ENCODE measurements at regions of chr9 and their contacts with region 1.

Region 1: GRCh38 chr9:21812946-21813568 is 10.6 kb downstream of the MTAP start:
- DNase-seq: peak; percentile 76 to 87
- ATAC-seq: peak; percentile 88
- H3K4me3 ChIP-seq: no peak overlapping the region
- H3K27ac ChIP-seq: peak overlapping the region in 1 of 2 donors; percentile 8
- H3K4me1 ChIP-seq: no peaks in the 10 kb centered on the region
- H3K27me3 ChIP-seq: no peaks in the 10 kb centered on the region

Region 2: DNA sequence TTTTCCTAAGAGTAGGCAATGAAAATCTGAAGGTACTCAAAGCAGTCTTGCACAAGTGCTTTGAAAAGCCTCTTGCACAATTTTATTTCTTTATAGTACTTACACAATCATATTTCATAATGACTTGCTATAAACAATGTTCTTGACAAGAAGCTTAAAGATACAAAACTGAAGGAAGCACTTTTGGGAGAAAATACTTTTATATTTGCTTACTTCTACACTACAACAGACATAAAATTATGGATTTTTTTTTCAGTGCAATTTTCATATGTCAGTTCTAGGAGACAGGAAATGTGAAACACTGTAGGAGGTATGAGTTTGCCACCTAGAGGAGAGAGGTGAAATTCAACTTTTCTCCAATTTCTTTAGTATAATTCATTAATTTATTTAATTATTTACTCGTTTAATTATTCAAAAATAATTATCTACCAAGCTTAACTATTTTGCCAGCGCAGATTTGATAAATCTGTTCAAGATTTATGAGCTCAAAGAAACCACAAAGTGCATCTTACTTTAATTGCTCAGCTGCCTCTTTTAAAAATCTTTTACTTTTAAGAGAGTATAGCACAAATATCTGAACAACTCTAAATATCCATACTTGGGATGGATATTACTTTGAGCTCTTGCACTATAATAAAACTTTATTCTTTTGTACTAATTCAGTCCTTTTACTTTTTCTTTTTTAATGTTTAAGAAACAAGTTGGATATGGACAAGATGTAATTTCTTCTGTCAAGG is 225.1 kb after region 1 on chr9:
- intact Hi-C with region 1: loop called (anchors 5 kb)
- DNase-seq: no peak
- ATAC-seq: no peak
- H3K4me3 ChIP-seq: no peak overlapping the region
- H3K27ac ChIP-seq: no peak overlapping the region
- H3K4me1 ChIP-seq: no peaks in the 10 kb centered on the region
- H3K27me3 ChIP-seq: no peaks in the 10 kb centered on the region

Region 3: GRCh38 chr9:22119537-22120158 is 306.6 kb after region 1 on chr9:
- intact Hi-C with region 1: loop called (anchors 2 kb)
- DNase-seq: no peak
- ATAC-seq: peak; percentile 52
- H3K4me3 ChIP-seq: no peak overlapping the region
- H3K27ac ChIP-seq: no peak overlapping the region
- H3K4me1 ChIP-seq: no peaks in the 10 kb centered on the region
- H3K27me3 ChIP-seq: no peaks in the 10 kb centered on the region

Region 4: DNA sequence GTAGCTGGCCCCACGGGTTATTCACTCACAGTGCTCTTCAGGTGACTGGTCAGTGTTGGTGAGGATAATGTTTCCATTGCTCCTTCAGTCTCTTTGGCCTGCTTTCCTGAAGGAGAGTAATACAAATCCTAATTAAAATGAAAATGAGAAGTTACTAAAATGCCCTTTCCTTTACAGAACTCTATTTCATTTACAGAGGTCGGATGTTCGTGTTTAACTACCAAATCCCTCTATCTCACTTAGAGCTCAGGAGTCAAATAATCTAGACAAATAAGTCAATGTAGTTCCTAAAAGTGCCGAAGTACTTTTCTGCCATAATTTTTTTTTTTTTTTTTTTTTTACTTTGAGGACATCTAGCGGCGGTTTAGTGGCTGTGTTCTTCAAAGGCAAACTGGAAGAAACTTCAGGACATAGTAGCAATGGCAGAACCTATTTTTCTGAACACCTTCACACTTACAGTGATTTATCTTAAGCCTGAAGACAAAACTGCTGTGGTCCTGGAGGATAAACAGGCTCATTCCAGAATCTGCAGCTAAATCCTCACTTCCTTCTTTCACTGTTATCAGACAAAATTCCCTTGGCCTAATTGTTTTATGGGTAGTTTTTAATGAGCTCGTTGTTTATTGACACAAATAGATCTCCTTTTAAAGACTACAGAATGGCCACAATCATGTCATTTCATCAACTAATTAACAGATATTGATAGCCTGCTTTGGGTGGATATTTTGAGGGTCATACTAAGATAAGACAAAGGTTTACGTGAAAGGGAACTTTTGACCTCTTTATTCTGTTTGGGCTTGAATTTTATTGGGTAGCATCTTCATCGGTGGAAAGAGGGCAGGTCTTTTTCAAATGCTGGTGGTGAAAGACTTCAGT is 426.0 kb after region 1 on chr9:
- intact Hi-C with region 1: loop called (anchors 5 kb)
- DNase-seq: no peak
- ATAC-seq: no peak
- H3K4me3 ChIP-seq: no peak overlapping the region
- H3K27ac ChIP-seq: no peak overlapping the region
- H3K4me1 ChIP-seq: no peaks in the 10 kb centered on the region
- H3K27me3 ChIP-seq: no peaks in the 10 kb centered on the region

Region 5: GRCh38 chr9:22446950-22447617 is 634.0 kb after region 1 on chr9:
- intact Hi-C with region 1: loop called (anchors 5 to 10 kb)
- DNase-seq: peak; percentile 65 to 78
- ATAC-seq: peak; percentile 87
- H3K4me3 ChIP-seq: peak overlapping the region; percentile 51 to 73
- H3K27ac ChIP-seq: peak overlapping the region in 1 of 2 donors; percentile 74
- H3K4me1 ChIP-seq: peaks cover 0 to 4% of the 10 kb centered on the region in 2 donors
- H3K27me3 ChIP-seq: no peaks in the 10 kb centered on the region

Region 6: GRCh38 chr9:22452415-22453010 is 639.5 kb after region 1 on chr9:
- intact Hi-C with region 1: loop called (anchors 5 to 10 kb)
- DNase-seq: peak; percentile 54 to 74
- ATAC-seq: peak; percentile 65
- H3K4me3 ChIP-seq: no peak overlapping the region
- H3K27ac ChIP-seq: no peak overlapping the region
- H3K4me1 ChIP-seq: peaks cover 0 to 2% of the 10 kb centered on the region in 2 donors
- H3K27me3 ChIP-seq: no peaks in the 10 kb centered on the region